ENCODE measurements at regions of chr2 and their contacts with region 1.

Region 1: DNA sequence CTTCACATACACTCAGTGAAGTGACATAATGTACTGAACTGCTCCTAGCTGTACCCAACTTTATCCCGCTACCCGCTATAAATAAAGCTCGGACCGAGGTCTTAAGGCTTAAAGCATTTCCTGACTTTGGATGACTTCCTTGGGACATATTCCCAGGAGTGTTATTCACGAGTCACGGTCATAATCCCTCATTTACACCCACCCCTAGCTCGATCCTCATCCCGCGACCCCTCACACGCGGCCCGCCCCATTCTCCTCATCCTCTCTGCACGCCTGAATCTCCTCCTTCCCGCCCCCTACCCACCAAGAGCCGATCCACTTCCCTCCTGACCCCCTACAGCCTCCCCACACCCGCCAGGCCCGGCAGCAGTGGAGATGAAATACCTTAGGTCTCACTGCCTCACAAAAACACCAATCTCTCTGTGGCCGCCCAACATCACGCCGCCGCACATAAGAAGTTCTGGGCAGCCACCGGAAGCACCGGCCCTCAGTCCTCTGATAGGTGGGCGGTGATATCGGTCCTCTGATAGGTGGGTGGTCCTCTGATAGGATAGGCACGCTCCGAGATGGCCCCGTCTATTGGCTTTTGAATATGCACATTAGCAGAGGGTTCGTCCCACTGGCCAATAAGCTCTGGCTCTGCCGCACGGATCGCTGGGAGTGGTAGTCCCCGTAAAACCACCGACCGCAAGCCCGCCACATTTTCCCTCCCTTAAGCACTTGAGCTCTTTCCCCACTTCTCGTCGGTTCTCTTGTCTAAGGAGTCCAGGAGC is at the start of gene WDCP:
- DNase-seq: peak; percentile 92
- H3K4me3 Mint-ChIP-seq: peak within 1 kb of the TSS; percentile 94
- H3K27ac Mint-ChIP-seq: peak within 1 kb of the TSS; percentile 86
- H3K4me1 Mint-ChIP-seq: peaks cover 24% of the 10 kb centered on the region
- H3K27me3 Mint-ChIP-seq: no peaks in the 10 kb centered on the region
- total RNA-seq, gene WDCP: 21.9 and 23.1 TPM in 2 replicates

Region 2: DNA sequence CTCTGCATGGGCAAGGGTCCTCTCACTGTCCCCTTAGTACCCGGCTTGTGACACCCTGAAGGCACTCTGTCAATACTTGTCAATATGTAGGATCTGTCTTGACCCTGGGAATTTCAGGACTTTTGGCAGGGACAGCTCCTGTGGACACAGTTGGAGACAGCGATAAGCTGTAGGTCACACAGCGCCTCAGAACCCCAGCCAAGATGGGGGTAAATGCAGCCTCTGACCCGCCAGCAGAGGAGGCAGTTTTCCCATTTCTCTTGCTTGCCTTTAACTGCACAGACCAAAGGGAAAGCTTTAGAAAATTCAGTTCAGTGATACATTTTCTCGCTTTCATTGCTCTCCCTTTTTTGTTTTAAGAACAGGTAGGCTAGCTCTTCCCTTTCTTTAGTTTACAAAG is 716.9 kb before region 1 on chr2:
- intact Hi-C with region 1: no loop called
- DNase-seq: no peak
- H3K4me3 Mint-ChIP-seq: no peak overlapping the region
- H3K27ac Mint-ChIP-seq: no peak overlapping the region
- H3K4me1 Mint-ChIP-seq: no peaks in the 10 kb centered on the region
- H3K27me3 Mint-ChIP-seq: no peaks in the 10 kb centered on the region

Region 3: GRCh38 chr2:23939987-23940717 is 107.0 kb before region 1 on chr2 and contains the start of gene UBXN2A:
- intact Hi-C with region 1: loop called (anchors 1 kb)
- DNase-seq: peak; percentile 72
- H3K4me3 Mint-ChIP-seq: peak within 1 kb of the TSS; percentile 89
- H3K27ac Mint-ChIP-seq: peak within 1 kb of the TSS; percentile 74
- H3K4me1 Mint-ChIP-seq: peaks cover 26% of the 10 kb centered on the region
- H3K27me3 Mint-ChIP-seq: peaks cover 21% of the 10 kb centered on the region
- total RNA-seq, gene UBXN2A: 11.4 and 13.0 TPM in 2 replicates

Region 4: GRCh38 chr2:24123195-24123921 is 76.2 kb after region 1 on chr2 and contains the starts of genes FAM228B and PFN4:
- intact Hi-C with region 1: loop called (anchors 2 kb)
- DNase-seq: peak; percentile 66
- H3K4me3 Mint-ChIP-seq: peak within 1 kb of the TSS; percentile 85
- H3K27ac Mint-ChIP-seq: peak within 1 kb of the TSS; percentile 86
- H3K4me1 Mint-ChIP-seq: peaks cover 15% of the 10 kb centered on the region
- H3K27me3 Mint-ChIP-seq: no peaks in the 10 kb centered on the region
- total RNA-seq, gene FAM228B: 3.1 and 4.8 TPM in 2 replicates
- total RNA-seq, gene PFN4: not detected in 2 replicates

Region 5: GRCh38 chr2:24495446-24495845 is 448.3 kb after region 1 on chr2:
- intact Hi-C with region 1: no loop called
- DNase-seq: no peak
- H3K4me3 Mint-ChIP-seq: no peak overlapping the region
- H3K27ac Mint-ChIP-seq: no peak overlapping the region
- H3K4me1 Mint-ChIP-seq: peaks cover 29% of the 10 kb centered on the region
- H3K27me3 Mint-ChIP-seq: peaks cover 7% of the 10 kb centered on the region

Region 6: GRCh38 chr2:24920098-24920808 is 873.1 kb after region 1 on chr2 and contains the start of gene ADCY3:
- intact Hi-C with region 1: loop called (anchors 1 kb)
- DNase-seq: peak; percentile 49
- H3K4me3 Mint-ChIP-seq: peak within 1 kb of the TSS; percentile 93
- H3K27ac Mint-ChIP-seq: peak within 1 kb of the TSS; percentile 90
- H3K4me1 Mint-ChIP-seq: peaks cover 32% of the 10 kb centered on the region
- H3K27me3 Mint-ChIP-seq: peaks cover 2% of the 10 kb centered on the region
- total RNA-seq, gene ADCY3: 101 and 108 TPM in 2 replicates

Measured in activated T-helper 1 cell treated with anti-CD3 and anti-CD28 coated beads, Interleukin-12 subunit alpha, Interleukin-12 subunit beta, Interleukin-2, Interleukin-4 antibody, amounts not matched to agents 30 ng/mL and 10 ng/mL and 1 ng/mL, durations not matched to agents 14 hours and 24 hours and 36 hours (primary cell).